B cell (primary cell): ENCODE measurements at regions of chr6 and their contacts with region 1.

Region 1: DNA sequence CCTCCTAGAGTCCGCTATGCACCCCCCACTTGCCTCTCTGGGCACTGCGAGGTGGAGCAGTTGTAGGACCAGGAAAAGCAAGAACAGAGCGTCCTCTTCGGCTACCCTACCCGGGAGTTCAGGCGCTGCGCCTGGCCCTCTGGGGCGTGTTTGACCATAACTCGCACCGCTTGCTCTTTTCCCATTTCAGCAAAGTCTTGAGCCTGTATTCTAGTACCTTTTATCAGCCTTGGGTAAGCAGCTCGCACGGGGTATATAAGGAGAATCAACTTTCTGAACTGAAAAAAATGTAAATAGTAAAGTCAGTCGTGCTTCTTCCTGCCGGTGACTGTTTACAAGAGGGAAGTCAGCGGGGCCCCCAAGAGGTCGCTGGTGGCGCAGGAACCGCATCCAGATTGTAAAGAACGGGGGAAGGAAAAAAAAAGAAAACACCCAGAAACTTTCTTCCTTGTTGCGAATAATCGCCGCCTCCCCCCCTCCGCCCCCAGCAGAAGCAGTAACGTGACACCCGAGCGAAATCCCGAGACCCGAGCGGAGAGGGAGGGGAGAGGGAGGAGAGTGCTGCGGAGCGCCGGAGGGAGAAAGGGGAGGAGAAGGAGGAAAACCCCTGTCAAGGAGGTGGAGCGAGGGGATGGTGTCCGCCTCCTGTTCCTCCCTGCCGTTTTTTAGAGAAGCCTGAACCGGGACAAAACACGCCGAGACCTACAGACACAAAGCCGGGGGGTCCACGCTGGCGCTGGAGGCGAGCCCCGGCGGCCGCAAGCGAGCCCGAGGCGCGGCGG is at the start of gene UST:
- DNase-seq: peak; percentile 90
- ATAC-seq: peak; percentile 40
- H3K4me3 ChIP-seq: peak within 1 kb of the TSS; percentile 65 to 92 (median 84)
- H3K4me3 Mint-ChIP-seq: peak within 1 kb of the TSS; percentile 98
- H3K27ac ChIP-seq: peak within 1 kb of the TSS; percentile 77 to 88
- H3K27ac Mint-ChIP-seq: peak within 1 kb of the TSS; percentile 95
- H3K4me1 ChIP-seq: peaks cover 18 to 30% of the 10 kb centered on the region in 2 donors
- H3K4me1 Mint-ChIP-seq: peaks cover 40% of the 10 kb centered on the region
- H3K27me3 ChIP-seq: no peaks in the 10 kb centered on the region
- H3K27me3 Mint-ChIP-seq: no peaks in the 10 kb centered on the region
- CTCF ChIP-seq: peak; percentile 78
- total RNA-seq, gene UST: 16.9 TPM in 2 replicates

Region 2: DNA sequence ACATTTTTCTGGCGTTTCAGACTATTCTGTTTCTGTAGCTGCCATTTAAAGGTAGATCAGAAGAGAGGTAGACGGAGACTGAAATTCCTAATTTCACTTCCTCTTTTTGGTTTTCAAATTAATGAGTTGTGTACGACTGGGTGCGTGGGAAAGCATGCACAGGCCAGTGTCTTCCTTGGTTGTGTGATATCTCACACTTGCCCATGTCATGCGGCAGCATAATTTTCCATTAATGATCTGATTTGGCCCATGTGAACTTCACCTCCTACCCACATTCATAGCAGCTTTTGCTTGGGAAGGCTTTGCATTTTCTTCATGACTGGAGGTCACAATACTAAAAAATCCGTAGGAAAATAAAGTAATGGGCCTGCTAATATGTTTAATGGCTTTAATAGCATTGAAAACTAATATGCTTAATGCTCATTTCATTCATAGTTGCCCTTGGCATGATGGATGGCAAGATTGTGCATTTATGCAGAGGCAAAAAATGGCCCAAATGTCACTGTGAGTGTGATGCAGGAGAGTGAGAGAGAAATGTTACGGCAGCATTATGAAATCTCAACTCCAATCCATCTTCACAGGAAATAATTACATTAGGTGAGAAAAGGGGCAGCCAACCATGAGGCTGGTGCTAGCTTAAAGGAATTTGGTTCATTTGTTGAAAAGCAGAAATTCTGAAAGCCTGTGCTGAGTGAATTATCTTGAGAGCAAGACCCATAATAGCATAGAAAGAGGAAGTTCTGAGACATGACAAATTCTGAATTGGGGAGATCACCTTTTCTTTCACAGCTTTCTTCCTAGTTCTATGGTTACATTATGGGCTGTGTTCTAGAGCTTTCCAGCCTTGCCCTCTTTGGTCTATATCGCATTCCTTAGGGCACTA is 68.7 kb before region 1 on chr6:
- CTCF ChIA-PET with region 1: no interaction called
- POLR2A ChIA-PET with region 1: no interaction called
- intact Hi-C with region 1: loop called (anchors 5 kb)
- DNase-seq: peak; percentile 82
- ATAC-seq: peak; percentile 79
- H3K4me3 ChIP-seq: peak overlapping the region in 3 of 5 experiments; percentile 6 to 50 (median 15)
- H3K4me3 Mint-ChIP-seq: peak overlapping the region; percentile 71
- H3K27ac ChIP-seq: peak overlapping the region; percentile 74 to 81
- H3K27ac Mint-ChIP-seq: peak overlapping the region; percentile 88
- H3K4me1 ChIP-seq: peaks cover 56% of the 10 kb centered on the region in 2 donors
- H3K4me1 Mint-ChIP-seq: peaks cover 54% of the 10 kb centered on the region
- H3K27me3 ChIP-seq: no peaks in the 10 kb centered on the region
- H3K27me3 Mint-ChIP-seq: no peaks in the 10 kb centered on the region
- CTCF ChIP-seq: no peak

Region 3: DNA sequence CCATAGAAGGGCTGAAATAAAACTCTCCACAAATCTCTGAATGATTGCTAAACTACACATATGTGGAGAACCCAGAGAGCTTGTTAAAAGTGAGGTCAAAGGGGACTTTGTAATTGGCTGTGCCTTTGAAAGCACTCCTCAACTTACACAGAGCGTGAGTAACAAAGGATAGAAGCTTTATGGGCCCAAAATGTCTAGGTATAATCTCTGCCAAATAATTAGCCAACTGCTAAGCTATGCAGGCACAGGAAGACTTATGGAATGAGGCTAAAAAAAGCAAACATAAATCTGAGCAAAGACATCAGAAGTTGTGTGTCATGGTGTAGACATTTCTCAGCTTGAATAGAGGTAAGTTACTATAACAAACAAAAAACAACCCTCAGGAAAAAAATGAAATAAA is 23.1 kb before region 1 on chr6:
- CTCF ChIA-PET with region 1: no interaction called
- POLR2A ChIA-PET with region 1: no interaction called
- intact Hi-C with region 1: no loop called
- DNase-seq: no peak
- ATAC-seq: no peak
- H3K4me3 ChIP-seq: no peak overlapping the region
- H3K4me3 Mint-ChIP-seq: no peak overlapping the region
- H3K27ac ChIP-seq: no peak overlapping the region
- H3K27ac Mint-ChIP-seq: no peak overlapping the region
- H3K4me1 ChIP-seq: no peaks in the 10 kb centered on the region
- H3K4me1 Mint-ChIP-seq: no peaks in the 10 kb centered on the region
- H3K27me3 ChIP-seq: no peaks in the 10 kb centered on the region
- H3K27me3 Mint-ChIP-seq: peaks cover 17% of the 10 kb centered on the region
- CTCF ChIP-seq: no peak

Region 4: DNA sequence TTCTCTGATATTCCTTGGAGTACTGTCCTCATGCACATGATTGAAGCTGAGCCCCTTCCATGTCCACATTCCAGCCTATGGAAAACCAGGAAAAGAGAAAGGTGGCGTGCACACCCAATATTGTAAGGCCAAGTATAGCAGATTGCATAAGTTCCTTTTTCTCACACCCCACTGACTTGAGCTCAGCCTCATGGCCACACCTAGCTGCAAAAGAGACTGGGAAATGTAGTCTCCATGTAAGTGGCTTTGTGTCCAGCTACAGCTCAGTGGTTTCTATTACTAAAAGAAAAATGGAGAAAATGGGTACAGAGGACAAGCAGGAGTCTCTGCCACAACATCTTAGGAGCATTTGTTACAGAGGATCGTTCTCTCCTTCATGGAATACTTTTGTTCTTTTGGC is 10.6 kb before region 1 on chr6:
- CTCF ChIA-PET with region 1: no interaction called
- POLR2A ChIA-PET with region 1: no interaction called
- intact Hi-C with region 1: no loop called
- DNase-seq: no peak
- ATAC-seq: no peak
- H3K4me3 ChIP-seq: no peak overlapping the region
- H3K4me3 Mint-ChIP-seq: no peak overlapping the region
- H3K27ac ChIP-seq: no peak overlapping the region
- H3K27ac Mint-ChIP-seq: no peak overlapping the region
- H3K4me1 ChIP-seq: peaks cover 11 to 15% of the 10 kb centered on the region in 2 donors
- H3K4me1 Mint-ChIP-seq: peaks cover 23% of the 10 kb centered on the region
- H3K27me3 ChIP-seq: no peaks in the 10 kb centered on the region
- H3K27me3 Mint-ChIP-seq: no peaks in the 10 kb centered on the region
- CTCF ChIP-seq: no peak

Region 5: GRCh38 chr6:148831064-148831463 is 84.5 kb after region 1 on chr6:
- CTCF ChIA-PET with region 1: interaction called, 3 read pairs
- POLR2A ChIA-PET with region 1: no interaction called
- intact Hi-C with region 1: loop called (anchors 5 kb)
- DNase-seq: peak; percentile 61
- ATAC-seq: peak; percentile 74
- H3K4me3 ChIP-seq: peak overlapping the region in 4 of 5 experiments; percentile 16 to 52 (median 35)
- H3K4me3 Mint-ChIP-seq: peak overlapping the region; percentile 67
- H3K27ac ChIP-seq: peak overlapping the region in 1 of 2 donors; percentile 49
- H3K27ac Mint-ChIP-seq: no peak overlapping the region
- H3K4me1 ChIP-seq: peaks cover 27 to 29% of the 10 kb centered on the region in 2 donors
- H3K4me1 Mint-ChIP-seq: peaks cover 45% of the 10 kb centered on the region
- H3K27me3 ChIP-seq: no peaks in the 10 kb centered on the region
- H3K27me3 Mint-ChIP-seq: no peaks in the 10 kb centered on the region
- CTCF ChIP-seq: no peak

Region 6: GRCh38 chr6:148947621-148948444 is 201.3 kb after region 1 on chr6:
- CTCF ChIA-PET with region 1: interaction called, 28 read pairs
- POLR2A ChIA-PET with region 1: no interaction called
- intact Hi-C with region 1: loop called (anchors 1 kb)
- DNase-seq: peak; percentile 88
- ATAC-seq: peak; percentile 88
- H3K4me3 ChIP-seq: no peak overlapping the region
- H3K4me3 Mint-ChIP-seq: no peak overlapping the region
- H3K27ac ChIP-seq: no peak overlapping the region
- H3K27ac Mint-ChIP-seq: no peak overlapping the region
- H3K4me1 ChIP-seq: peaks cover 0 to 4% of the 10 kb centered on the region in 2 donors
- H3K4me1 Mint-ChIP-seq: peaks cover 13% of the 10 kb centered on the region
- H3K27me3 ChIP-seq: no peaks in the 10 kb centered on the region
- H3K27me3 Mint-ChIP-seq: no peaks in the 10 kb centered on the region
- CTCF ChIP-seq: peak; percentile 92